ENCODE measurements at regions of chr2 and their contacts with region 1.

Region 1: GRCh38 chr2:238263204-238264071 is 23.6 kb upstream of the HES6 start:
- DNase-seq: peak; percentile 67
- H3K4me3 Mint-ChIP-seq: no peak overlapping the region
- H3K27ac Mint-ChIP-seq: peak overlapping the region; percentile 43
- H3K4me1 Mint-ChIP-seq: peaks cover 7% of the 10 kb centered on the region
- H3K27me3 Mint-ChIP-seq: no peaks in the 10 kb centered on the region

Region 2: DNA sequence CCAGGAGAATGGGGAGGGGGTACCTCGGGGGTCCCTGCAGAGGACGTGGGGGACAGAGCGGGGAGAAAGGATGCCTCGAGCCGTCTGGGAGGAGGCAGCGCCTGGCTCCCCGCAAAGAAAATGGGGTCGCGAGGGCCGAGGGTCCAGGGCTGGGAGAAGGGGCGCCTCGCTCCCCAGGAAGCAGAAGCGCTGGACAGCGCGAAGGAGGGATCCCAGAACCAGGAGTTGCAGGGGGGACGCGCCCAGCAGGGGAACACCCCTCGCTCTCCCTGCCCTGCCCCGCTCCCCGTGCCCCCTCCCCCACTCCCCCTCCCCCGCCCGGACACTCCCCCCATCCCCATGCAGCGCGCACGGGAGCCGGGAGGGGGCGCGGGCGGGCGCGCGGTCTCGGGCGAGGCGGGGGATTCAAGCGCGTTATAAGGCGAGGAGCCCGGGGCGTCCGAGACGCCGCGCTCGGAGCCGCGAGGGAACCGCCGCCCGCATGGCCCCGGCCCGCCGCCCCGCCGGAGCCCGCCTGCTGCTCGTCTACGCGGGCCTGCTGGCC is 104.8 kb before region 1 on chr2 and contains the start of gene ERFE:
- intact Hi-C with region 1: loop called (anchors 5 kb)
- DNase-seq: peak; percentile 29
- H3K4me3 Mint-ChIP-seq: peak within 1 kb of the TSS; percentile 68
- H3K27ac Mint-ChIP-seq: no peak within 1 kb of the TSS
- H3K4me1 Mint-ChIP-seq: peaks cover 7% of the 10 kb centered on the region
- H3K27me3 Mint-ChIP-seq: peaks cover 18% of the 10 kb centered on the region
- total RNA-seq, gene ERFE: 0.20 TPM in 1 of 2 replicates, not detected in the other

Region 3: GRCh38 chr2:238169708-238170251 is 93.7 kb before region 1 on chr2:
- intact Hi-C with region 1: no loop called
- DNase-seq: no peak
- H3K4me3 Mint-ChIP-seq: no peak overlapping the region
- H3K27ac Mint-ChIP-seq: no peak overlapping the region
- H3K4me1 Mint-ChIP-seq: no peaks in the 10 kb centered on the region
- H3K27me3 Mint-ChIP-seq: peaks cover 6% of the 10 kb centered on the region

Region 4: DNA sequence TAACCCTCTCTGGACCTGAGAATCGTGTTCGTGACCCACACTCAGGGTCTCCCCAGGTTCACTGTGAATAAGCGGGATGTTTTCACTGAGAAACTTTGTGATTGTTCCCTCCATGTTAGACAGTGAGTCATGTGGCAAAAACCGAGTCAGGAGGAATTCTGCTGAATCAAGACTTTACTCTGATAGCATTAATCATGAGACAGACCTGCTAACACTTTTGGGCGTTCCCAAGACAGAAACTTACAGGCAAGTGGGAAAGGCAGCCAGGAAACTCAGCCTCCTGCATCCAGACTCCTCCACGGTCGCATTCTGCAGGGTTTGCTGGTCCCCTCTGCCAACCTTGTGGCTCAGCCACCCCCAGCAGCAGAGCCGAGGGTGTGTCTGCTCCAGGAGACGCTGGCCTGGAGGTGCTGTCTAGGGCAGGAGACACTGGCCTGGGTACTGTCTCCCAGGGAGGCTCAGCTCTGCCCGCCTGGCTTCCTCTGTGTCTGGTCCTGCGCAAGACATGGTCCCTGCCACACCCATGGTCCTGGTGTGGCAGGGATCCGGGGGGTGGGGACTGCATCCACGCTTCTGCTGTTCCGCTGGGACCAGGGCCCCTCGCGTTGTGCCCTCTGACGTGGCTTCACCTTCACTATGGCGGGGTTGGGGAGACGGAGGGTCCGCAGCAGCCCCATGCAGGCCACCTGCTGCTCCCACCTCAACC is 761.8 kb after region 1 on chr2:
- intact Hi-C with region 1: no loop called
- DNase-seq: no peak
- H3K4me3 Mint-ChIP-seq: no peak overlapping the region
- H3K27ac Mint-ChIP-seq: no peak overlapping the region
- H3K4me1 Mint-ChIP-seq: no peaks in the 10 kb centered on the region
- H3K27me3 Mint-ChIP-seq: peaks cover 2% of the 10 kb centered on the region

Measured in activated T-helper 1 cell treated with anti-CD3 and anti-CD28 coated beads, Interleukin-12 subunit alpha, Interleukin-12 subunit beta, Interleukin-2, Interleukin-4 antibody, amounts not matched to agents 30 ng/mL and 10 ng/mL and 1 ng/mL, durations not matched to agents 14 hours and 24 hours and 36 hours (primary cell).